ENCODE measurements at regions of chr21 and their contacts with region 1.

Region 1: GRCh38 chr21:39911286-39912199 is 44.3 kb downstream of the PCP4 start:
- DNase-seq: no peak
- ATAC-seq: no peak
- H3K4me3 ChIP-seq: no peak overlapping the region
- H3K27ac ChIP-seq: no peak overlapping the region
- H3K4me1 ChIP-seq: no peaks in the 10 kb centered on the region
- H3K27me3 ChIP-seq: no peaks in the 10 kb centered on the region
- CTCF ChIP-seq: peak in 4 of 9 donors; percentile 13 to 17 (median 14)

Region 2: DNA sequence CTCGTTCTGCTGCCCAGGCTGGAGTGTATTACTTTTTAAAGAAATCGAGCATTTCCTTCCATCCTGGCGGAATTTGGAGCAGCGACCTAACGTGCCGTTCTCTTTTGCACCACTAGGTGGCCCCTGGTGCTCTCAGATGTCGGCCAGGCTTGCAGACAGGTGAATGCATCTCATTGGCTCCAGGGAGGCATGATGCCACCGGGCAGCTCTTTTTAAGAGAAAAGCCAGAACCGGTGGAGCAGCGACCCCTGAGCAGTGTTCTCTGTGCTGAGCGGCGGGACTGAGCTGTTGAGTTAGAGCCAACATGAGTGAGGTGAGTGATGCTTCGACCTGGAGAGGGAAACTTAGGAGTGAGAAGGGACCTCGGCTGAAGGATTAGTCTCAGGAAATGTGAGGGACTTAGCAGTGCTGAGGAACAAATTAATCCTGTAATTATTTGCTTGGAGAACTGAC is 44.3 kb before region 1 on chr21 and contains the start of gene PCP4:
- intact Hi-C with region 1: loop called in 1 of 10 experiments (anchors 10 kb)
- DNase-seq: peak in 1 of 2 donors; percentile 10
- ATAC-seq: peak in 2 of 8 donors; percentile 29 to 34
- H3K4me3 ChIP-seq: no peak within 1 kb of the TSS
- H3K27ac ChIP-seq: no peak within 1 kb of the TSS
- H3K4me1 ChIP-seq: no peaks in the 10 kb centered on the region
- H3K27me3 ChIP-seq: peaks cover 0 to 22% (median 0%) of the 10 kb centered on the region in 7 donors
- CTCF ChIP-seq: peak; percentile 45 to 81 (median 74)
- total RNA-seq, gene PCP4: 2.7 to 6.6 (median 3.6) TPM

Measured in heart right ventricle (tissue), 16 donors.